Prostate gland (tissue), 2 donors: ENCODE measurements at regions of chr4 and their contacts with region 1.

Region 1: GRCh38 chr4:80184053-80184790 is 13.1 kb upstream of the PRDM8 start:
- DNase-seq: peak; percentile 87
- H3K4me3 ChIP-seq: peak overlapping the region; percentile 63
- H3K27ac ChIP-seq: peak overlapping the region; percentile 80 to 86
- H3K4me1 ChIP-seq: no peaks in the 10 kb centered on the region
- H3K27me3 ChIP-seq: no peaks in the 10 kb centered on the region
- CTCF ChIP-seq: peak; percentile 83 to 95 (median 94)
- POLR2A ChIP-seq: no peak

Region 2: DNA sequence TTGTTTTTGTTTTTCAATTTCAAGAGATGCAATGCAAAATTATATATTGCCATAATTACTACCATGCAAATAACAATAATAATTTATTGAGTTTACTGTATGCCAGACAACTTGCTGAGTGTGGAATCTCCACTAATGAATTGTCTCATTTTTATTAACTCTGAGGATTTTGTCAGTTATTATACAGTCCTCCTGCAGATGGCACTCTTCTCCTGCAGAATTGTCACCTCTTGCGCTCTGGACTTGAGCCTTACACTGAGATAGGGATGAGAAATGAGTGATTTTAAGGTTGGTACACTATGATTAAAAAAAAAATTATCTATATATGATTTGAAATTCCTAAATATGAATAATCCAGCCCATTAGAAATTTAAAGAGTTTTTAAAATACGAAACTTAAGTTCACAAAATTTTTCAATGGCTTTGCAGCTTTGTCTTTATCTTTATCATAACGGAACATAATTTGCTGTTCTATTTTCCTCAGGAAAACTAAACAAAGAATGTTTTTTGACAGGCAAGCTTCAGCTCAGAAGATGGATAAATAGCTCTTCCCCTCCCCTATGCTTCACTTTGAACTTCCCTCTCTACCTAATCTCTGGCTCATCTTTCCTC is 1232.3 kb before region 1 on chr4:
- intact Hi-C with region 1: loop called (anchors 10 kb)
- DNase-seq: peak; percentile 35
- H3K4me3 ChIP-seq: no peak overlapping the region
- H3K27ac ChIP-seq: no peak overlapping the region
- H3K4me1 ChIP-seq: peaks cover 7% of the 10 kb centered on the region
- H3K27me3 ChIP-seq: no peaks in the 10 kb centered on the region
- CTCF ChIP-seq: peak in 3 of 4 experiments; percentile 61 to 73 (median 73)
- POLR2A ChIP-seq: no peak

Region 3: GRCh38 chr4:79042079-79042674 is 1142.0 kb before region 1 on chr4:
- intact Hi-C with region 1: loop called (anchors 10 kb)
- DNase-seq: peak; percentile 31
- H3K4me3 ChIP-seq: no peak overlapping the region
- H3K27ac ChIP-seq: no peak overlapping the region
- H3K4me1 ChIP-seq: no peaks in the 10 kb centered on the region
- H3K27me3 ChIP-seq: no peaks in the 10 kb centered on the region
- CTCF ChIP-seq: peak in 3 of 4 experiments; percentile 63 to 78 (median 64)
- POLR2A ChIP-seq: no peak

Region 4: DNA sequence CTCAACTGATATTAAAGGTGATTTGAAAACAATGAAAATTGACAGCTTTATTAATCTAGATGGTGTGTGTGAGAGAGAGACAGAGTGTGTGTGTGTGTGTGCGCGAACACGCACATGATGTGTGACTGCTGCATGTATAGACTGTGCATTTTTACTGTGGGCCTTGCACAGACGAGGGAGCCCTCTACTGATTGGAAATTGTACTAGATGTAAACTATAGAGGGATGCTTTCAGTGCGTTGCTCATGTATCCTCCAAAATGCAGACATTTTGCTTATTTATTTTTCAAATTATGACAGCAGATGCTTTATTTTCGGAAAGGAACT is 607.8 kb before region 1 on chr4:
- intact Hi-C with region 1: loop called (anchors 10 kb)
- DNase-seq: no peak
- H3K4me3 ChIP-seq: no peak overlapping the region
- H3K27ac ChIP-seq: peak overlapping the region in 1 of 2 donors; percentile 23
- H3K4me1 ChIP-seq: no peaks in the 10 kb centered on the region
- H3K27me3 ChIP-seq: no peaks in the 10 kb centered on the region
- CTCF ChIP-seq: peak in 3 of 4 experiments; percentile 40 to 49 (median 48)
- POLR2A ChIP-seq: no peak

Region 5: GRCh38 chr4:79831701-79832514 is 352.3 kb before region 1 on chr4:
- intact Hi-C with region 1: loop called (anchors 5 kb)
- DNase-seq: no peak
- H3K4me3 ChIP-seq: no peak overlapping the region
- H3K27ac ChIP-seq: peak overlapping the region; percentile 43 to 73
- H3K4me1 ChIP-seq: peaks cover 7% of the 10 kb centered on the region
- H3K27me3 ChIP-seq: no peaks in the 10 kb centered on the region
- CTCF ChIP-seq: no peak
- POLR2A ChIP-seq: no peak

Region 6: DNA sequence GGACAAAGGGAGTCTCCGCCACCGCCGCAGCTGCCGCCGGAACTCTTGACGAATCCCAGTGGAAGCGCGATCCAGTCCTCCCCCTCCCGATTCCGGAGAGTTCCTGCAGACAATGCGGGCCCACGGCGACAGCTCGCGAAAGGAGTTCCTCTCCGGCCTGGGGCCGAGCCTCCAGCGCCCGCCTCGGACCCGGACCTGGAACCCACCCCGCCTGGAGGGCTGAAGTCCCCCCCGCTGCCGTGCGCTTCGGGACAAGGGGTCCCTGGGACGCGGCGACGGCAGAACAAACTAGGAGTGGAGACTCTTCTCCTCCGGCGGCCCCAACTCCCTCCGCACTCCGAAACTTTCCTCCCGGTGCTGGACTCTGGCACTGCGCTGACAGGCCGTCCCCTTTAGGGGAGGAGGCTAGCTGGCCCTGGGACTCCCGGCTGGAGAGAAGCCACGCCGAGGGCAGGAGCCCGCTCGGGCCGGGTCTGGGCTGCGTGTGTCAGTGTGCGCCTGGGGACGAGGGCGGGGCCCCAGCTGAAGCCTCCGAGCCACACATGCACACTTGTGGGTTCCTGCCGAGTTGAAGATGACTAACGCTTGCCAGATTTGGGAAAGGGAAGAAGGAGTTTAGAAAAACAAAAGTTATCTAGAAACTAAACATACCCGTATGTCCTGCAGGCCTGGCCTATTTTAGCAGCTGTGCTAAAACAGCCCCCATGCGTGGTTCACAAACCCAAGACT is 111.3 kb before region 1 on chr4 and contains the start of gene ANTXR2:
- intact Hi-C with region 1: loop called (anchors 5 kb)
- DNase-seq: peak; percentile 83
- H3K4me3 ChIP-seq: peak within 1 kb of the TSS; percentile 87 to 98
- H3K27ac ChIP-seq: peak within 1 kb of the TSS; percentile 93 to 94
- H3K4me1 ChIP-seq: no peaks in the 10 kb centered on the region
- H3K27me3 ChIP-seq: no peaks in the 10 kb centered on the region
- CTCF ChIP-seq: peak in 1 of 4 experiments; percentile 15
- POLR2A ChIP-seq: peak; percentile 57
- total RNA-seq, gene ANTXR2: 86.1 to 133 TPM

Region 7: GRCh38 chr4:80521438-80521837 is 337.2 kb after region 1 on chr4:
- intact Hi-C with region 1: no loop called
- DNase-seq: no peak
- H3K4me3 ChIP-seq: no peak overlapping the region
- H3K27ac ChIP-seq: no peak overlapping the region
- H3K4me1 ChIP-seq: no peaks in the 10 kb centered on the region
- H3K27me3 ChIP-seq: no peaks in the 10 kb centered on the region
- CTCF ChIP-seq: no peak
- POLR2A ChIP-seq: no peak